Activated B cell treated with CpG ODN at 0.5 μM for 24 hours (primary cell): ENCODE measurements at regions of chr9 and their contacts with region 1.

Region 1: GRCh38 chr9:136711751-136712689 is at the start of gene DIPK1B:
- DNase-seq: no peak
- ATAC-seq: peak; percentile 53
- H3K4me3 Mint-ChIP-seq: peak within 1 kb of the TSS; percentile 69
- H3K27ac Mint-ChIP-seq: no peak within 1 kb of the TSS
- H3K4me1 Mint-ChIP-seq: peaks cover 24% of the 10 kb centered on the region
- H3K27me3 Mint-ChIP-seq: peaks cover 14% of the 10 kb centered on the region
- CTCF ChIP-seq: no peak
- total RNA-seq, gene DIPK1B: 1.5 and 2.2 TPM in 2 replicates

Region 2: GRCh38 chr9:136665111-136665703 is 46.8 kb before region 1 on chr9:
- CTCF ChIA-PET with region 1: no interaction called
- POLR2A ChIA-PET with region 1: no interaction called
- intact Hi-C with region 1: loop called (anchors 10 kb)
- DNase-seq: no peak
- ATAC-seq: peak; percentile 47
- H3K4me3 Mint-ChIP-seq: peak overlapping the region; percentile 73
- H3K27ac Mint-ChIP-seq: no peak overlapping the region
- H3K4me1 Mint-ChIP-seq: peaks cover 6% of the 10 kb centered on the region
- H3K27me3 Mint-ChIP-seq: peaks cover 16% of the 10 kb centered on the region
- CTCF ChIP-seq: no peak

Region 3: DNA sequence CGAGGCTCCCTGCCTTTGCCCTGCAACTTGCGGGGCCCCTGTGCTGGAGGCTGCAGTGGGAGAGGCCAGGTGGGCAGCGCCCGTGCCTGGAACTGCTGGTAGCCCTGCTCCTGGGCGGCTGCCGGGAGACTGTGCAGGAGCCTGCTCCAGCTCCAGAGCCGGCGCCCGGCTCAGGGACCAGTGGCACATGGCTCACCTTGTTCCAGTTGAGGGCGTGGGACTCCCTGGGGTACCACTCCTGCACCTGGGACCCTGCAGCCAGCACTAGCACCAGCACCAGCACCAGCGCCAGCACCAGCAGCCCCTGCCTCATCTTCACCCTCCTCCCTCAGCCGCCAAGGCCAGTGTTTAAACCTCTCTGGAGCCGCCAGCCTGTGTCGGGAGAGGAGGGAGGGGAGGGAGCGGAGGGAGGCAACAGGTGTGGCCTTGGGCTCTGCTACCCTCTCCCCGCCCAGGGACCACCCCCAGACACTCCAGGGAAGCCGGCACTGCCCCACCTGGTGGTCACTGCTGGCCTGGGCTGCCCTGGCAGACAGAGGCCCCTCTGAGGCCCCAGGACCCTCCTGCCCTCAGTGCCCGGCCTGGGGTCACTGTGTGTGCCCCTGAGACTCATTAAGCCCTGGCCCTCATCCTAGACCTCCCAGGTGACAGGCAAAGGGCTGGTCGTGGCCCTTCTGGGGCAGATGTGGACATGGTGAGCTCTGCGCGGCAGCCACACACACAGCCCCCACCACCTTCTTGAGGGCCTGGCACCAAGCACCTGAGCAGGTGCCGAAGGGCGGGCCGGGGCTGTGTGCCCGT is 30.8 kb after region 1 on chr9 and contains the start of gene LCN10:
- CTCF ChIA-PET with region 1: no interaction called
- POLR2A ChIA-PET with region 1: interaction called, 10 read pairs
- intact Hi-C with region 1: no loop called
- DNase-seq: no peak
- ATAC-seq: no peak
- H3K4me3 Mint-ChIP-seq: peak within 1 kb of the TSS; percentile 86
- H3K27ac Mint-ChIP-seq: peak within 1 kb of the TSS; percentile 74
- H3K4me1 Mint-ChIP-seq: peaks cover 51% of the 10 kb centered on the region
- H3K27me3 Mint-ChIP-seq: no peaks in the 10 kb centered on the region
- CTCF ChIP-seq: no peak
- total RNA-seq, gene LCN10: 13.7 and 15.9 TPM in 2 replicates

Region 4: GRCh38 chr9:136762915-136763648 is 51.1 kb after region 1 on chr9:
- CTCF ChIA-PET with region 1: no interaction called
- POLR2A ChIA-PET with region 1: interaction called, 14 read pairs
- intact Hi-C with region 1: no loop called
- DNase-seq: no peak
- ATAC-seq: peak; percentile 16
- H3K4me3 Mint-ChIP-seq: peak overlapping the region; percentile 4
- H3K27ac Mint-ChIP-seq: no peak overlapping the region
- H3K4me1 Mint-ChIP-seq: peaks cover 64% of the 10 kb centered on the region
- H3K27me3 Mint-ChIP-seq: no peaks in the 10 kb centered on the region
- CTCF ChIP-seq: no peak

Region 5: DNA sequence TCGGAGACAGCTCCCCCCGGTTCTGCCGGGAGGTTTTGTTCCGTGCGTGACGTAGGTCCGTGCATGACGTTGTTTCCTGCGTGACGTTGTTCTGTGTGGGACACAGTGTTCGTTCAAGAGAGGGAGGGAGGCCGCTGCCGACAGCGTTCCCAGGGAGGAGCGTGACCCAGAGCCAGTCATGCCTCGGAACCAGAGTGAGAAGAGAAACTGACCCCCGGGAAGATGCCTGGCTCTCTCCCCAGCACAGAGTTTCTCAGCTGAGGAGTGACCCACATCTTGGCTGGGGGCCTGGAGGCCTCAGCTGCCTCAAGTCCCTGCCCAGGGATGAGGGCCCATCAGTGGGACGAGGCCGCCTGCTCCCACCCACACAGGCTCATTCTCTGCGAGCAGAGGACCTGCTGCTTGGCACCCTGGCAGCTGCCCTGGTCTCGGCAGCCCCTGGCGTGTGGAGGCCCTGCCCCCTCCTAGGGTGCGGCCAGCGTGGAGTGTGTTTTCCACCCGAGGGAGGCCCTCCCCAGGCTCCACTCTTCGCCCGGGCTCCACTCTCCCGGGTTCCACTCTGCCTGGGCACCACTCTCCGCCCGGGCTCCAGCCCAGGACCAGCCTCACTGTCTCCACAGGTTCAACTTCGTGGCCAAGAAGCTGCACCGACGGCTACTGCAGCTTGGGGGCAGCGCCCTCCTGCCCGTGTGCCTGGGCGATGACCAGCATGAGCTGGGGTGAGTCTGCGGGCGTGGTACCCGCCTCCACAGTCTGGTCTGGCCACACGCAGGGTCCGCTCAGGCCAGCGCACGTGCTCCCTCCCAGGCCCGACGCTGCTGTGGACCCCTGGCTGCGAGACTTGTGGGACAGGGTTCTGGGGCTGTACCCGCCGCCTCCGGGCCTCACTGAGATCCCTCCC is 501.4 kb after region 1 on chr9:
- CTCF ChIA-PET with region 1: no interaction called
- POLR2A ChIA-PET with region 1: interaction called, 11 read pairs
- intact Hi-C with region 1: no loop called
- DNase-seq: no peak
- ATAC-seq: no peak
- H3K4me3 Mint-ChIP-seq: no peak overlapping the region
- H3K27ac Mint-ChIP-seq: no peak overlapping the region
- H3K4me1 Mint-ChIP-seq: no peaks in the 10 kb centered on the region
- H3K27me3 Mint-ChIP-seq: no peaks in the 10 kb centered on the region
- CTCF ChIP-seq: no peak